Activated T-helper 2 cell treated with anti-CD3 and anti-CD28 coated beads, Interferon-gamma antibody, Interleukin-2, Interleukin-4, amounts not matched to agents 10 μg/mL and 5 μg/mL and 100 μg/mL, durations not matched to agents 14 hours and 24 hours and 36 hours (primary cell): ENCODE measurements at regions of chr9 and their contacts with region 1.

Region 1: DNA sequence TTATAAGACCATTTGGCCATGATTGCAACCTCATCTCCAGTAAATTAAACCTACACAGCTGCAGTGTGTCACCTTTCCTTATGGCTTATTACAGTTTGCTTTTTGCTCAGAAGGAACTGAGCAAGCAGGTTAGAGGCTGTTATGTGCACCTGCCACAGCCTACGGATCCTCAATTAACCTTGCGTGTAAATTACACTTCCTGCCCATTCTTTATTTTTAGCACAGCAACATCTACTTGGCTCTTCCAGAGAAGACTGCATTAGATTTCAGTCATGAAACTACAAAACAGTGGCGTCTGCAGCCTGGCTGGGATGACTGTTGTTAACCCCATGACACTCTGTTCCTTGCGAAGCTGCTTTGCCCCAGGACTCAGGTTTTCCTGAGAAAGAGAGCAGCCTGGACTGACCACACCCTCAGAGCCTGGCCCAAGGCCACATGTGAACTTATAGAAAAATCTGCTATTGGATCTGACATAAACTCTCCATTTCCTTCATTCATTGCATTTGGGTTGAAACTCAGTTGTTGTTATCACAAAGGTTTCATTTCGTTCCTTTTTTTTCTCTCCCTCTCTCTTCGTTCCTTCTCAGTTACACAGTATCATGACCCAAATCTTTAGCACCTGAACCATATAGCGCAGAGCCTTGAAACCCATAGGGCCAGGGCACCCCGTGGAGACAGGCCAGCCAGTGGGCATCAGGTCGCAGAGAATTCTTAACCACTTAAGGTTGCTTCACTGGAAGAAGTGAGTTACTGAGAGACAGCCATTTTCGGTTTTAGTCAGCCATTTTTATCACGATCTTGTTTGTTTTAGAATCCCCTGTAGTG is 138.6 kb downstream of the PALM2AKAP2 start:
- DNase-seq: peak; percentile 56
- H3K4me3 Mint-ChIP-seq: peak overlapping the region; percentile 84
- H3K27ac Mint-ChIP-seq: peak overlapping the region; percentile 100
- H3K4me1 Mint-ChIP-seq: peaks cover 61% of the 10 kb centered on the region
- H3K27me3 Mint-ChIP-seq: no peaks in the 10 kb centered on the region

Region 2: GRCh38 chr9:109887079-109887478 is 31.5 kb before region 1 on chr9:
- intact Hi-C with region 1: loop called (anchors 1 kb)
- DNase-seq: no peak
- H3K4me3 Mint-ChIP-seq: no peak overlapping the region
- H3K27ac Mint-ChIP-seq: peak overlapping the region; percentile 89
- H3K4me1 Mint-ChIP-seq: peaks cover 76% of the 10 kb centered on the region
- H3K27me3 Mint-ChIP-seq: no peaks in the 10 kb centered on the region

Region 3: DNA sequence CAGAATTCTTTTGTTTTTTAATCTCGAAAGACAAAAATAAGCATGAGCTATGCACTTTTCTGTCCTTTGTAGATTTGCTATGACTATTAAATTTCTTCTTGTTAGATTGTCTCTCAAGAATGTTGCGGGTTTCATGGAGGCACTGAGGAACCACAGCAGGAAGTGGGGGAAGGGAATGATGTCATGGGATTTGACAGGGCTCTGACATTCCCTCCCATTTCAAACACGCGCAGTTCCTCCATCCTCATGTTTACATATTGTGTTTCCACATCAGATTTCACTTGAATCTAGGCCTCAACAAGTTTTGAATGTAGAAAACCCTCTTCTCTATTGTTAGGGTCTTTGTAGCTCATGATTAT is 16.3 kb after region 1 on chr9:
- intact Hi-C with region 1: loop called (anchors 1 kb)
- DNase-seq: no peak
- H3K4me3 Mint-ChIP-seq: no peak overlapping the region
- H3K27ac Mint-ChIP-seq: peak overlapping the region; percentile 84
- H3K4me1 Mint-ChIP-seq: peaks cover 50% of the 10 kb centered on the region
- H3K27me3 Mint-ChIP-seq: no peaks in the 10 kb centered on the region

Region 4: GRCh38 chr9:109969011-109969410 is 50.5 kb after region 1 on chr9:
- intact Hi-C with region 1: loop called (anchors 1 kb)
- DNase-seq: no peak
- H3K4me3 Mint-ChIP-seq: peak overlapping the region; percentile 35
- H3K27ac Mint-ChIP-seq: peak overlapping the region; percentile 95
- H3K4me1 Mint-ChIP-seq: peaks cover 79% of the 10 kb centered on the region
- H3K27me3 Mint-ChIP-seq: peaks cover 2% of the 10 kb centered on the region

Region 5: DNA sequence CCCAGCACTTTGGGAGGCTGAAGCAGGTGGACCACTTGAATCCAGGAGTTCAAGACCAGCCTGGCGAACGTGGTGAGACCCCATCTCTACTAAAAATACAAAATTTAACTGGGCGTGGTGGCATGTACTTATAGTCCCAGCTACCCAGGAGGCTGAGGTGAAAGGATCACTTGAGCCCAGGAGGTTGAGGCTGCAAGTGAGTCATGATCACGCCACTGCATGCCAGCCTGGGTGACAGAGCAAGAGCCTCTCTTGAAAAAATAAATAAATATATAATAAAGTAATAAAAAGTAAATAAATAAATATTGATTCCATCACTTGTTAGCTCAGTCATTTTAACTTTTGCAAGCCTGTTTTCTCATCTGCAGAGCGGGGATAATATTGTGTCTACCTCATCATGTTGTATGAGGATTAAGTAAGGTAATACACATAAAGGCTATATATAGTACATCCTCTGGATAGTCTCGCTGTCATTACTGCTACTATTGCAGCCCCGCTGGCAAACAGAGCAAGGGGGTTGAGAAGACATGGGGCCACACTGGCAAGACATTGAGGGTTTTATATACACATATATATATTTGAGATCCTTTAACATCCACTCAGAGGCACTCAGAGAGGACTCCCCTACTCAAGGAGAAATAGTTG is 78.5 kb after region 1 on chr9:
- intact Hi-C with region 1: no loop called
- DNase-seq: no peak
- H3K4me3 Mint-ChIP-seq: no peak overlapping the region
- H3K27ac Mint-ChIP-seq: no peak overlapping the region
- H3K4me1 Mint-ChIP-seq: no peaks in the 10 kb centered on the region
- H3K27me3 Mint-ChIP-seq: no peaks in the 10 kb centered on the region

Region 6: GRCh38 chr9:110143950-110144545 is 225.5 kb after region 1 on chr9:
- intact Hi-C with region 1: loop called (anchors 1 kb)
- DNase-seq: peak; percentile 34
- H3K4me3 Mint-ChIP-seq: peak overlapping the region; percentile 51
- H3K27ac Mint-ChIP-seq: peak overlapping the region; percentile 95
- H3K4me1 Mint-ChIP-seq: peaks cover 79% of the 10 kb centered on the region
- H3K27me3 Mint-ChIP-seq: no peaks in the 10 kb centered on the region